ENCODE measurements at regions of chr2 and their contacts with region 1.

Region 1: DNA sequence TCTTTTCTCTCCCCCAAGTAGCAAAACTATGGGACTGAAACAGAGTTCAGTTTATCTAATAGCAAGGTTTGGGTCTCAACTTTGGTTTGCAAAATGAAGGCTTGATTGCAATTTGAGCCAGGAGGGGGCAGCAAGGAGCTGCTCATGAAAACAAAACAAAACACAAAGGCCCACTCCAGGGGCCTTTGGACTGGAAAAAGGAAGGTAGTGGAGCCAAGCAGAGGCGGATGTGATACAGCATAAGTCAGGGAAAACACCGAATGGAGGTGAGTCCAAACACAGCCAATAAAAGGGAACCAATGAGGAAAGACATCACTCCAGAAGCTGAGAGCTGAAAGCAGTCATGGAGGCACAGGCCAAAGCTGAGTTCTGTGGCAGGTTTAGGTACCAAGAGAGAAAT is 799.7 kb upstream of the ACVR2A start:
- DNase-seq: peak; percentile 62
- H3K4me3 Mint-ChIP-seq: no peak overlapping the region
- H3K27ac Mint-ChIP-seq: no peak overlapping the region
- H3K4me1 Mint-ChIP-seq: peaks cover 4% of the 10 kb centered on the region
- H3K27me3 Mint-ChIP-seq: peaks cover 5% of the 10 kb centered on the region

Region 2: GRCh38 chr2:147141930-147142329 is 96.8 kb after region 1 on chr2:
- CTCF ChIA-PET with region 1: no interaction called
- POLR2A ChIA-PET with region 1: no interaction called
- DNase-seq: no peak
- H3K4me3 Mint-ChIP-seq: no peak overlapping the region
- H3K27ac Mint-ChIP-seq: no peak overlapping the region
- H3K4me1 Mint-ChIP-seq: no peaks in the 10 kb centered on the region
- H3K27me3 Mint-ChIP-seq: no peaks in the 10 kb centered on the region

Region 3: GRCh38 chr2:147331790-147332419 is 286.8 kb after region 1 on chr2:
- CTCF ChIA-PET with region 1: interaction called, 22 read pairs
- POLR2A ChIA-PET with region 1: no interaction called
- DNase-seq: peak; percentile 59
- H3K4me3 Mint-ChIP-seq: no peak overlapping the region
- H3K27ac Mint-ChIP-seq: peak overlapping the region; percentile 47
- H3K4me1 Mint-ChIP-seq: peaks cover 38% of the 10 kb centered on the region
- H3K27me3 Mint-ChIP-seq: no peaks in the 10 kb centered on the region

Region 4: DNA sequence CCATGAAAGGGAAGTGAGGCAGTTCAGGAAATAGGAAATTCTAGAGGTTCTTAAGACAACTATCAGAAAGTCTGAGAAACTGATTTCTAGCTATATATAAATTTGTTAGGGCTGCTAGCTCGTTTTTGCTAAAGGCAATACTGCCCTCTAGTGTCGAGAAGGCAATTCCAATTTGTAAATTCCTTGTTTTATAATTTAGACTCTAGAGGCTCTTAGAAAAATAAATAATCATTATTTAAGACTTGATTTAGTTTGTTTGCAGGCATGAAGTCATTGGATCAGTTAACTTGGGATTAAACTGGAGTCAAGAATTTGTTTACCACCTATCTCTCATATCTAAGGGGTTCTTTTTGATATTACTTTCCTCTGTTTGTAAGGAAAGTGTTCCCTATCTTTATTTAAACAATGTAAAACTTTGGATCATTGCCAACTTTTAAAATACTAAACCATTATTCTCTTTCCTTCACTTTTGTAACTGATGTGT is 865.9 kb after region 1 on chr2:
- CTCF ChIA-PET with region 1: interaction called, 73 read pairs
- POLR2A ChIA-PET with region 1: interaction called, 7 read pairs
- DNase-seq: peak; percentile 23
- H3K4me3 Mint-ChIP-seq: no peak overlapping the region
- H3K27ac Mint-ChIP-seq: no peak overlapping the region
- H3K4me1 Mint-ChIP-seq: peaks cover 20% of the 10 kb centered on the region
- H3K27me3 Mint-ChIP-seq: no peaks in the 10 kb centered on the region

Measured in activated CD4-positive, alpha-beta memory T cell treated with anti-CD3 and anti-CD28 coated beads, Interleukin-2, amount 10 ng/mL, durations not matched to agents 7 days and 5 days (primary cell).